CD4-positive, alpha-beta memory T cell (primary cell): ENCODE measurements at regions of chr2 and their contacts with region 1.

Region 1: DNA sequence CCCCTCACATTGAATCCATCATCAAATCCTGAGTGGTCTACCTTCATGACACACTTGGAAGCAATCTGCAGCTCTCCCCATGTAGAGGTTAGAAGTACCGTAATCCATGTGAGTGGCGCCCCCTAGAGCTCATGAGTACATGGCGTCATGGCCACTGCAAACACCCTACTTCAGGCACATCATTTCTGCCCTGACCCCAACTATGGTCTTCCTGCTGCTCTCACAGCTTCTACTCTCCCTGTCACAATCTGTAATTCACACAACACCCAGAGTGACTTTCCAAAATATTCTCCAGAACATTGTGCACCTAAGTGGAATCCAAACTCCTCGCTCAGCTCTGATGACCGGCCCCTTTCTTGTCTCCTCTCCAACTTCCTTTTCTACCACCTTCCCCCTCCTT is 141.9 kb downstream of the ANKRD44 start:
- DNase-seq: peak; percentile 45 to 73 (median 50)
- H3K4me3 ChIP-seq: no peak overlapping the region
- H3K4me3 Mint-ChIP-seq: peak overlapping the region in 4 of 8 donors; percentile 4 to 41 (median 28)
- H3K27ac ChIP-seq: peak overlapping the region; percentile 7
- H3K27ac Mint-ChIP-seq: peak overlapping the region; percentile 53 to 91 (median 81)
- H3K4me1 ChIP-seq: peaks cover 87% of the 10 kb centered on the region
- H3K4me1 Mint-ChIP-seq: peaks cover 52 to 84% (median 65%) of the 10 kb centered on the region in 4 donors
- H3K27me3 ChIP-seq: no peaks in the 10 kb centered on the region
- H3K27me3 Mint-ChIP-seq: no peaks in the 10 kb centered on the region

Region 2: GRCh38 chr2:197011799-197012641 is 156.7 kb before region 1 on chr2:
- CTCF ChIA-PET with region 1: interaction called, 4 read pairs
- POLR2A ChIA-PET with region 1: no interaction called
- intact Hi-C with region 1: loop called (anchors 5 kb)
- DNase-seq: peak in 4 of 5 donors; percentile 28 to 43 (median 37)
- H3K4me3 ChIP-seq: no peak overlapping the region
- H3K4me3 Mint-ChIP-seq: no peak overlapping the region
- H3K27ac ChIP-seq: no peak overlapping the region
- H3K27ac Mint-ChIP-seq: peak overlapping the region; percentile 50 to 80 (median 68)
- H3K4me1 ChIP-seq: no peaks in the 10 kb centered on the region
- H3K4me1 Mint-ChIP-seq: peaks cover 3 to 10% (median 9%) of the 10 kb centered on the region in 4 donors
- H3K27me3 ChIP-seq: no peaks in the 10 kb centered on the region
- H3K27me3 Mint-ChIP-seq: no peaks in the 10 kb centered on the region

Region 3: DNA sequence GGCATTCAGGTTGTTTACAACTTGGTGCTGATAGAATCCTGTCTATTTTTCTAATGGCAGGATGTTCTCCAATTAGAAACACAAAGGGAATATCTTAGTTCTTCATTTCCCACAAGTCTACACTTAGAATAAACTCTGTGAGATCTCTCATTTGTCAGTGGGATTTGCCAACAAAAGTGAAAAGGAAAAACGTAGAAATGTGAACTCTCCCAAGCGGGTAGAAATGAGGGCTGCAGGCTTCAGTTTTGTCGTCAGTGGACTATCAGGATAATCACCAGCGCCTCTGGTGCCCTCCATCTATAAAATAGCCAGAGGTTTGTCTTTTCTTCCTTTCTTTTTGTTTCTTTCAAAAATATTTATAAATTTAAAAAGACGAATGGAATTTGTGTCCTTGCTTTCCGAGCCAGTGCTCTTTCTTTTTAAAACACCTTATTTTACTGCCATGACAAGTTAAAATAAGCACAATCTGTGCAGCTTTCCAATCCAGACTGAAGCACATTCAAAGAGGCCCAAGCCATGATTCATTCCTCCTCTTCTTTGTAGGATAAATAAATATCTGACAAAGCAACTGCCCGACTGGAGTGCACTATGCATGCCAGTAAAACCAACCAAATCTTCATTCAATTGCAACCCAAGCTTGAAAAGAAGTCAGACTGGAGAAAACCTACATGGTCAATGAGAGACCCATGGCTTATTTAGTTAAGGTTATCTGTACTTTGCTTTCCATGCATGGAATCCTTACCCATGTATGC is 43.9 kb before region 1 on chr2:
- CTCF ChIA-PET with region 1: interaction called, 168 read pairs
- POLR2A ChIA-PET with region 1: no interaction called
- intact Hi-C with region 1: loop called (anchors 5 kb)
- DNase-seq: no peak
- H3K4me3 ChIP-seq: no peak overlapping the region
- H3K4me3 Mint-ChIP-seq: no peak overlapping the region
- H3K27ac ChIP-seq: no peak overlapping the region
- H3K27ac Mint-ChIP-seq: peak overlapping the region in 3 of 7 donors; percentile 11 to 75 (median 55)
- H3K4me1 ChIP-seq: peaks cover 48% of the 10 kb centered on the region
- H3K4me1 Mint-ChIP-seq: peaks cover 35 to 73% (median 52%) of the 10 kb centered on the region in 4 donors
- H3K27me3 ChIP-seq: no peaks in the 10 kb centered on the region
- H3K27me3 Mint-ChIP-seq: no peaks in the 10 kb centered on the region

Region 4: GRCh38 chr2:197130318-197130717 is 38.4 kb before region 1 on chr2:
- CTCF ChIA-PET with region 1: interaction called, 28 read pairs
- POLR2A ChIA-PET with region 1: no interaction called
- intact Hi-C with region 1: loop called (anchors 5 kb)
- DNase-seq: peak; percentile 30 to 52 (median 41)
- H3K4me3 ChIP-seq: no peak overlapping the region
- H3K4me3 Mint-ChIP-seq: peak overlapping the region in 6 of 8 donors; percentile 22 to 64 (median 32)
- H3K27ac ChIP-seq: no peak overlapping the region
- H3K27ac Mint-ChIP-seq: peak overlapping the region; percentile 8 to 86 (median 85)
- H3K4me1 ChIP-seq: peaks cover 75% of the 10 kb centered on the region
- H3K4me1 Mint-ChIP-seq: peaks cover 57 to 84% (median 67%) of the 10 kb centered on the region in 4 donors
- H3K27me3 ChIP-seq: no peaks in the 10 kb centered on the region
- H3K27me3 Mint-ChIP-seq: no peaks in the 10 kb centered on the region

Region 5: DNA sequence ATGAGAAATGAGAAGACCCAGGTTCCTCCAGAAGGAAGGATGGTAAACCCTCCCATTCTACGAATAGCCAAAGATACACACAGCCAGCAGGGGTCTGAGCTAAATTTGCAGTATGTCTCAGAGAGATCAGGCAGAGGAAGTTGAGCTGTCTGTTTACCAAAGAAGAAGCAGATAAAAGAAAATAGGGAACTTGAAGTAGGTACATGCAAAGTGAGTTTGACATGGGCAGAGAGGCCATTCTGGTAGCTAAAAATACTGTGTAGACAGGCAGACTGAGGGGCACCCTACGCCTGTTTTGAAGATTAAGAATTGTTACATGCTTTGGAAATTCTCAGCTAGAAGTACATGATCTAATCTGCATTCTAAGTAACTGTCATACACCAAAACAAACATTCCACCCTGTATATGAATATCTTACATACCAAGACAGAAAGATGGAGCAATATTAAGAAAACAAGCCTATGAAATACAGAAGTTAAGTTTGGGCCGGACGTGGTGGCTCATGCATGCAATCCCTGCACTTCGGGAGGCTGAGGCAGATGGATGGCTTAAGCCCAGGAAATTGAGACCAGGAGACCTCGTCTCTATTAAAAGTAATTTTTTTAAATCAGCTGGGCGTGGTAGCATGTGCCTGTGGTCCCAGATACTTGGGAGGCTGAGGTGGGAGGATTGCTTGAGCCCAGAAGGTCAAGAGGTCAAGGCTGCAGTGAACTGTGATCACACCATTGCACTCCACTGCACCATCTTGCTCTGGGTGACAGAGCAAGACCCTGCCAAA is 16.1 kb before region 1 on chr2:
- CTCF ChIA-PET with region 1: interaction called, 12 read pairs
- POLR2A ChIA-PET with region 1: interaction called, 4 read pairs
- intact Hi-C with region 1: loop called (anchors 2 kb)
- DNase-seq: peak; percentile 18 to 44 (median 32)
- H3K4me3 ChIP-seq: no peak overlapping the region
- H3K4me3 Mint-ChIP-seq: peak overlapping the region; percentile 13 to 68 (median 62)
- H3K27ac ChIP-seq: no peak overlapping the region
- H3K27ac Mint-ChIP-seq: peak overlapping the region; percentile 15 to 92 (median 72)
- H3K4me1 ChIP-seq: peaks cover 78% of the 10 kb centered on the region
- H3K4me1 Mint-ChIP-seq: peaks cover 62 to 85% (median 77%) of the 10 kb centered on the region in 4 donors
- H3K27me3 ChIP-seq: no peaks in the 10 kb centered on the region
- H3K27me3 Mint-ChIP-seq: no peaks in the 10 kb centered on the region